ENCODE measurements at regions of chr14 and their contacts with region 1.

Region 1: DNA sequence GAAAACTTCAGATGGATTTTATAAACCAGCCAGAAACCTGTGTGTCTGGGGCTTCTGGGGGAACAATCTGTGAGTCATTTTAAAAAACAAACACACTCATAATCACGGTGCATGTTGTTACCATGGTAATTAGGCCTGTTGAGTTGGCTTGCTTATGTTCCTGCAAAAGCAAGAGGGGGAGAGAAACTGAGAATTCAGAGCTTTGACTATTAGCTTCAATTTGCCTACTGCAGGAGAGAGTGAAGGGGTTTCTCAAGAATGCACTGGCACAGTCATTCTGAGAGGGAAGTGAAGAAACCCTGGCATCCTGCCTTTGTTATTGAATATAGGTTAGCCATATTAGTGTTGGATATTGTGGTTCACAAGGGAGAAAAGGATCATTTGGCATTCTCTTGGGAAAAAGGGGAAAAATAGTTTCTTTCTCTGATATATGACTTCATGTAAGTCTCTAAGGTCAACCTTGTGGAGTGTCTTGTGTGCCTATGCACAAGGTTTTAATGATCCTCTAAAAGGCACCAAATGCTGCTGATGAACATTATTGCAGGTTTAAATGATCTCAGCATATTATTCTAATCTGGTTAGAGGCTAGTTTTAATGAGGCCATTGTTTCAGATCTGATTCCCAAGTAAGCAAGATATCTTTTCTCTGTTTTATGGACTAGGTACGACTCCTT is 12.9 kb downstream of the GNG2 start:
- DNase-seq: peak; percentile 70
- ATAC-seq: peak; percentile 79
- H3K4me3 Mint-ChIP-seq: peak overlapping the region; percentile 30
- H3K27ac Mint-ChIP-seq: peak overlapping the region; percentile 91
- H3K4me1 Mint-ChIP-seq: peaks cover 66% of the 10 kb centered on the region
- H3K27me3 Mint-ChIP-seq: no peaks in the 10 kb centered on the region
- CTCF ChIP-seq: no peak

Region 2: GRCh38 chr14:51860164-51860824 is 13.1 kb before region 1 on chr14 and contains the start of gene GNG2:
- CTCF ChIA-PET with region 1: interaction called, 6 read pairs
- POLR2A ChIA-PET with region 1: interaction called, 25 read pairs
- intact Hi-C with region 1: no loop called
- DNase-seq: peak; percentile 91
- ATAC-seq: peak; percentile 95
- H3K4me3 Mint-ChIP-seq: peak within 1 kb of the TSS; percentile 98
- H3K27ac Mint-ChIP-seq: peak within 1 kb of the TSS; percentile 90
- H3K4me1 Mint-ChIP-seq: peaks cover 44% of the 10 kb centered on the region
- H3K27me3 Mint-ChIP-seq: no peaks in the 10 kb centered on the region
- CTCF ChIP-seq: no peak
- total RNA-seq, gene GNG2: 174 to 184 TPM

Region 3: GRCh38 chr14:51908086-51908485 is 34.7 kb after region 1 on chr14:
- CTCF ChIA-PET with region 1: no interaction called
- POLR2A ChIA-PET with region 1: interaction called, 3 read pairs
- intact Hi-C with region 1: loop called (anchors 2 kb)
- DNase-seq: no peak
- ATAC-seq: no peak
- H3K4me3 Mint-ChIP-seq: no peak overlapping the region
- H3K27ac Mint-ChIP-seq: peak overlapping the region; percentile 48
- H3K4me1 Mint-ChIP-seq: peaks cover 66% of the 10 kb centered on the region
- H3K27me3 Mint-ChIP-seq: no peaks in the 10 kb centered on the region
- CTCF ChIP-seq: no peak

Measured in activated CD8-positive, alpha-beta T cell treated with anti-CD3 and anti-CD28 coated beads for 36 hours (primary cell).